ENCODE measurements at regions of chr20 and their contacts with region 1.

Region 1: DNA sequence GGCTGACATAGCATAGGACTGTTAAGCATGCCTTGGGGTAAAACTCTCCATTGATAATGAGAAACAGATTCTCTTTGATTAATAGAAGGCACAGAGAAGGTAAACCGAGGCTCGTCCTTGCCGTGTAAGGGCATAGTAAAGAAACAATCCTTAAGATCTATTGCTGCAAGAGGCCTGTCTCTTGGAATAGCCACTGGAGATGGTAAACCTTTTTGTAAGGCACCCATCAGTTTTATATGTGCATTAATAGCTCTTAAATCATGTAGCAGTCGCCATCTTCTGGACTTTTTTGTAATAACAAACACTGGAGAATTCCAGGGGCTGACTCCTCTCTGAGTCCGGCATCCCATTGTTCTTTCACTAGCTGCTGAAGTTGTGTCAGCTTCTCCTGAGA is 8.4 kb upstream of the ABHD12 start:
- DNase-seq: no peak
- ATAC-seq: peak; percentile 91
- H3K4me3 ChIP-seq: no peak overlapping the region
- H3K27ac ChIP-seq: no peak overlapping the region
- H3K4me1 ChIP-seq: peaks cover 6% of the 10 kb centered on the region; the same call in 1 of the 2 replicates
- H3K27me3 ChIP-seq: no peaks in the 10 kb centered on the region
- CTCF ChIP-seq: peak; percentile 44 to 64 (median 48); a peak in 5 of 6 replicates
- EP300 ChIP-seq: no peak
- POLR2A ChIP-seq: no peak
- RAD21 ChIP-seq: peak; percentile 88

Region 2: DNA sequence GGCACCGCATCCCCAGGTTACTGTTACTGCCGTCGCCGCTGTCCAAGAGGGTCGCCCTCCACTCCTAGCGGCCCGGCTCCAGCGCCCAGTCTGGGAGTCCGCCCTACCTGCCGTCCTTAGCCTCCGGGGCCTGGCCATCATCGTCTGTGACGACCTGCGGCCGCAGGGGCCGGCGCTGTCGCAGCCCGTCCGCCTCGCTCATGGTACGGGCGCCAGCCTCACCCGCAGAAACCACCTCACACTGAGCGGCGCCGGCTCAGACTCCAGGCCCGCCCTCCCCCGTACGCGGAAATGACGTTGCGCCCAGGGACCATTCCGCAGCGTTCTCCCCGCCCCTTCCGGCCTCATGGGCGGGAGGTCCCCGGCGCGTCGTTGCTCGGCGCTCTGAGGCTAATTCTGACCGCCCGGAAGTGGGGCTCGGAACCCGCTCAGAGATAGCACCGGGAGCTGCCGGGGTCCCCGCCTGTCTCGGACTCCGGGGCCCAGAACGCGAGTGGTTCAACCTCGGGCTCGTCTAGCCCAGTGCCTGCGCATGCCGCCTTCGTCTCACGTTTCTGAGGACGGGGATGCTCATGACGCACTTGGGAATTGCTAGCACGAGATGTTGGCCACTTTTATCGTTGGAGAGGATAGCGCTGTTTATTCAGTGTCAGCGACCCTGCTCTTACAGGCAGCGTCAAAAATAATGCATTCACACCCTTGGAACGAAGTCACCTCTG is 406.4 kb before region 1 on chr20 and contains the start of gene APMAP:
- CTCF ChIA-PET with region 1: interaction called, 10 read pairs
- POLR2A ChIA-PET with region 1: no interaction called
- RAD21 ChIA-PET with region 1: interaction called, 7 read pairs
- SMC1A ChIA-PET with region 1: interaction called, 14 read pairs
- in situ Hi-C with region 1: no loop called
- intact Hi-C with region 1: loop called (anchors 1 kb)
- DNase-seq: peak; percentile 66
- ATAC-seq: peak; percentile 93
- H3K4me3 ChIP-seq: peak within 1 kb of the TSS; percentile 87
- H3K27ac ChIP-seq: peak within 1 kb of the TSS; percentile 77
- H3K4me1 ChIP-seq: peaks cover 7% of the 10 kb centered on the region; the same call in 1 of the 2 replicates
- H3K27me3 ChIP-seq: no peaks in the 10 kb centered on the region
- CTCF ChIP-seq: no peak
- EP300 ChIP-seq: 0 out of 4 replicates have a peak, but pooled peaks of 1 of the 2 experiments have one; percentile 39
- POLR2A ChIP-seq: peak; percentile 98
- RAD21 ChIP-seq: no peak
- polyA plus RNA-seq, gene APMAP: 12.1 to 22.3 TPM

Region 3: GRCh38 chr20:25195014-25195961 is 203.7 kb before region 1 on chr20 and contains the start of gene ENTPD6:
- CTCF ChIA-PET with region 1: interaction called, 4 read pairs
- POLR2A ChIA-PET with region 1: no interaction called
- RAD21 ChIA-PET with region 1: interaction called, 4 read pairs
- SMC1A ChIA-PET with region 1: interaction called, 5 read pairs
- in situ Hi-C with region 1: no loop called
- intact Hi-C with region 1: loop called (anchors 5 kb)
- DNase-seq: peak; percentile 63
- ATAC-seq: peak; percentile 83
- H3K4me3 ChIP-seq: peak within 1 kb of the TSS; percentile 91
- H3K27ac ChIP-seq: peak within 1 kb of the TSS; percentile 59; the same call in 1 of the 2 replicates
- H3K4me1 ChIP-seq: peaks cover 11% of the 10 kb centered on the region
- H3K27me3 ChIP-seq: no peaks in the 10 kb centered on the region; a peak in 1 of 4 replicates
- CTCF ChIP-seq: peak in 2 of 3 experiments; percentile 3 to 8; a peak in 1 of 6 replicates
- EP300 ChIP-seq: no peak
- POLR2A ChIP-seq: peak; percentile 79
- RAD21 ChIP-seq: no peak
- polyA plus RNA-seq, gene ENTPD6: 0.53 to 2.5 TPM

Region 4: GRCh38 chr20:25254986-25255680 is 143.9 kb before region 1 on chr20:
- CTCF ChIA-PET with region 1: interaction called, 18 read pairs
- POLR2A ChIA-PET with region 1: no interaction called
- RAD21 ChIA-PET with region 1: interaction called, 5 read pairs
- SMC1A ChIA-PET with region 1: interaction called, 3 read pairs
- in situ Hi-C with region 1: no loop called
- intact Hi-C with region 1: no loop called
- DNase-seq: no peak
- ATAC-seq: no peak
- H3K4me3 ChIP-seq: no peak overlapping the region
- H3K27ac ChIP-seq: no peak overlapping the region
- H3K4me1 ChIP-seq: peaks cover 16% of the 10 kb centered on the region
- H3K27me3 ChIP-seq: no peaks in the 10 kb centered on the region
- CTCF ChIP-seq: no peak
- EP300 ChIP-seq: no peak
- POLR2A ChIP-seq: no peak
- RAD21 ChIP-seq: no peak

Region 5: GRCh38 chr20:25288266-25289181 is 110.5 kb before region 1 on chr20:
- CTCF ChIA-PET with region 1: interaction called, 95 read pairs
- POLR2A ChIA-PET with region 1: no interaction called
- RAD21 ChIA-PET with region 1: interaction called, 59 read pairs
- SMC1A ChIA-PET with region 1: interaction called, 5 read pairs
- in situ Hi-C with region 1: no loop called
- intact Hi-C with region 1: no loop called
- DNase-seq: peak; percentile 51
- ATAC-seq: peak; percentile 98
- H3K4me3 ChIP-seq: no peak overlapping the region
- H3K27ac ChIP-seq: peak overlapping the region; percentile 52
- H3K4me1 ChIP-seq: peaks cover 15% of the 10 kb centered on the region
- H3K27me3 ChIP-seq: no peaks in the 10 kb centered on the region
- CTCF ChIP-seq: no peak
- EP300 ChIP-seq: peak in 1 of 2 experiments; percentile 82; a peak in 3 of 4 replicates
- POLR2A ChIP-seq: no peak
- RAD21 ChIP-seq: no peak

Region 6: GRCh38 chr20:25299806-25300205 is 99.2 kb before region 1 on chr20:
- CTCF ChIA-PET with region 1: interaction called, 95 read pairs
- POLR2A ChIA-PET with region 1: no interaction called
- RAD21 ChIA-PET with region 1: interaction called, 59 read pairs
- SMC1A ChIA-PET with region 1: interaction called, 53 read pairs
- in situ Hi-C with region 1: loop called (anchors 5 kb)
- intact Hi-C with region 1: no loop called
- DNase-seq: no peak
- ATAC-seq: no peak
- H3K4me3 ChIP-seq: no peak overlapping the region
- H3K27ac ChIP-seq: peak overlapping the region; percentile 11; the same call in 1 of the 2 replicates
- H3K4me1 ChIP-seq: peaks cover 39% of the 10 kb centered on the region
- H3K27me3 ChIP-seq: no peaks in the 10 kb centered on the region
- CTCF ChIP-seq: no peak
- EP300 ChIP-seq: no peak
- POLR2A ChIP-seq: no peak
- RAD21 ChIP-seq: no peak

Region 7: DNA sequence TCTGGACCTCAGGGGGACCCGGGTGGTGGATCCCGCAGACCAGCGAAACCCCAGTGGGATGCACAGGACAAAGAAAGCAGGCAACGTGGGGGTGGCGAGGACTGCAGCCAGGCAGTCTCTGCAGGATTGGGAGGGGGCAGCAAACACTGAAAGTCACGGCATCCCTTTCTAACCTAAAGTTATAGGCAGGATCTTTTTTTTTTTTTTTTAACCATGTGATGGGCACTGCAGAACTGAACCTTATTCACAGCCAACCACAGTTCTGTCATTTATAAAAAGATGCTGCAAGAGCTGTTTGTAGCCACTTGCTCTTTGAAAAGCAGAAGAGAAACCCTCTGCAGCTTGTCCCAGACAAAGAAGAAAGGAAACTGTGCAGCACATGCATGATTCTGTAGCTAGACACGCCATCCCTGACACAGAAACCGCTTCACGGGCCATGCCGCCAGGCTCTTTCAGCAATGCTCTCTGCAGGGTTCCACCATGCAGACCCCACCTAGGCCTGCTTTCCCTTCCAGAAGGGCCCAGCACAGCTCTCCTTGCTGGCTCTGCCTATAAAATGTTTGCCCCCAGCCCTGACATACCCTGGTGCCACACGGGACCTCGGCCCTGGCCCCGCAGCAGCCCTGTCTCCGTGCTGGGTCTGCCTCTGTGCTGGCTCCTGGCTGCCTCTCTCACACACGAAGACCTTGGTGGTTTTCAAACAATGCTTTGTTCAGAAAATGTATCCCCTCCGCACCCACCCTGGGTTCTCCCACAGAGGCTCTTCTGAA is 80.4 kb before region 1 on chr20:
- CTCF ChIA-PET with region 1: interaction called, 7 read pairs
- POLR2A ChIA-PET with region 1: no interaction called
- RAD21 ChIA-PET with region 1: interaction called, 12 read pairs
- SMC1A ChIA-PET with region 1: interaction called, 23 read pairs
- in situ Hi-C with region 1: no loop called
- intact Hi-C with region 1: no loop called
- DNase-seq: peak; percentile 88
- ATAC-seq: peak; percentile 94
- H3K4me3 ChIP-seq: no peak overlapping the region
- H3K27ac ChIP-seq: peak overlapping the region; percentile 93
- H3K4me1 ChIP-seq: peaks cover 40% of the 10 kb centered on the region
- H3K27me3 ChIP-seq: no peaks in the 10 kb centered on the region
- CTCF ChIP-seq: no peak
- EP300 ChIP-seq: peak; percentile 77 to 89; a peak in 3 of 4 replicates
- POLR2A ChIP-seq: peak; percentile 77
- RAD21 ChIP-seq: no peak

Region 8: DNA sequence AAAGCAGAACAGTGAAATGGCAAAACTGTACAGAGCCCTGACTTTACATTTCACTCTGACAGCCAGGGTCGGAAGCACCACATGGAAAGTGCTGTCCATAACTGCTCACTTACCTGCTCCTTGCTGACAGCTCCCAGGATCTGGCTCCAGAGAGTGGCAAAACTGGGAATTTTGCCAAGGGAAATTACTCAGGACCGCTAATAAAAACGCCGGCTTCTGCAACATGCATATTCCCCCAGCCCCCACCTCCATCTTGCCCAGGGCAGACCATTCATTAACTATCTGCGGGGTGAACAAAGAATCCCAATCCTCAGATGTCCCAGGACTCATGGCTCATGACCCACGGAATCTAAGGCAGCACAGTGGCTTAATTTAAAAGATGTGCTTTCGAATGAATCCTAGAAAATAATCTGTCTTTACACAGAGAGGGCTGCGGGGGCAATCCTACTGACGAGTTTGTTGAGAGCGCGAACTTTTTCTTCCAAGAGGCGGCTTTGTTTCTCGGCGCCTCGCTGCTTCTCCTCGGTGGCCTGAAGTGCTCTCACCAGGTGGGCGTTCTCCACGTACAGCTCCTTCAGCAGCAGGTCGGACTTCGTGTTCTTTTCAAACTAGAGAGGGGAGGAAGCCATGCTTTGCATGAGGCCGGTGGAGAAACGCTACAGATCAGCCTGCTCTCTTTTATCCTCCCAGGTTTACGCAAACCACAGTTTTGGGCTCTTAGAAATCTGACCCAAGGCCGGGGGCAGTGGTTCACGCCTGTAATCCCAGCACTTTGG is 54.2 kb after region 1 on chr20:
- CTCF ChIA-PET with region 1: no interaction called
- POLR2A ChIA-PET with region 1: no interaction called
- RAD21 ChIA-PET with region 1: no interaction called
- SMC1A ChIA-PET with region 1: no interaction called
- in situ Hi-C with region 1: no loop called
- intact Hi-C with region 1: no loop called
- DNase-seq: no peak
- ATAC-seq: no peak
- H3K4me3 ChIP-seq: no peak overlapping the region
- H3K27ac ChIP-seq: no peak overlapping the region
- H3K4me1 ChIP-seq: no peaks in the 10 kb centered on the region
- H3K27me3 ChIP-seq: no peaks in the 10 kb centered on the region
- CTCF ChIP-seq: no peak
- EP300 ChIP-seq: no peak
- POLR2A ChIP-seq: no peak
- RAD21 ChIP-seq: no peak